Calu3 (cell line): ENCODE measurements at regions of chr4 and their contacts with region 1.

Region 1: GRCh38 chr4:11428899-11429698 is 405 bp upstream of the HS3ST1 start:
- DNase-seq: peak; percentile 95
- H3K4me3 Mint-ChIP-seq: peak overlapping the region; percentile 92
- H3K27ac Mint-ChIP-seq: peak overlapping the region; percentile 92
- H3K4me1 Mint-ChIP-seq: peaks cover 16% of the 10 kb centered on the region
- H3K27me3 Mint-ChIP-seq: no peaks in the 10 kb centered on the region
- CTCF ChIP-seq: peak; percentile 66

Region 2: DNA sequence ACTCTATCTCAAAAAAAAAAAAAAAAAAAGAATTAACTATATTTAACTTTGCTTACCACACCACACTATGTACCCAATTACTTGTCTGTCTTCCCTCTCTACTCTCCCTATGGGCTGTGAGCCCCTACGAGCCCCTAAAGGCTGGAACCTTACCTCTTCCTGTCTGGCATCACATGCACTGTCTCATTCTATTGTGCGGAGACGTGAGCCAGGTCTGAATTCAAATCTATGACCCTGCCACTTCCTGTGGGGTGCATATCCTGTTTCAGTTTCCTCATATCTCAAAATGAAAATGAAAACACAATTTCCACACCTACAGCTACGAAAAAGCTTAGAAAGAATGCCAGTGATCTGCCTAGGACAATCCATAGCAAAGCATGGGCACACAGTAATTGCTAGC is 42.5 kb after region 1 on chr4:
- CTCF ChIA-PET with region 1: no interaction called
- intact Hi-C with region 1: loop called (anchors 1 kb)
- DNase-seq: peak; percentile 27
- H3K4me3 Mint-ChIP-seq: peak overlapping the region; percentile 51
- H3K27ac Mint-ChIP-seq: peak overlapping the region; percentile 75
- H3K4me1 Mint-ChIP-seq: peaks cover 63% of the 10 kb centered on the region
- H3K27me3 Mint-ChIP-seq: no peaks in the 10 kb centered on the region
- CTCF ChIP-seq: no peak

Region 3: DNA sequence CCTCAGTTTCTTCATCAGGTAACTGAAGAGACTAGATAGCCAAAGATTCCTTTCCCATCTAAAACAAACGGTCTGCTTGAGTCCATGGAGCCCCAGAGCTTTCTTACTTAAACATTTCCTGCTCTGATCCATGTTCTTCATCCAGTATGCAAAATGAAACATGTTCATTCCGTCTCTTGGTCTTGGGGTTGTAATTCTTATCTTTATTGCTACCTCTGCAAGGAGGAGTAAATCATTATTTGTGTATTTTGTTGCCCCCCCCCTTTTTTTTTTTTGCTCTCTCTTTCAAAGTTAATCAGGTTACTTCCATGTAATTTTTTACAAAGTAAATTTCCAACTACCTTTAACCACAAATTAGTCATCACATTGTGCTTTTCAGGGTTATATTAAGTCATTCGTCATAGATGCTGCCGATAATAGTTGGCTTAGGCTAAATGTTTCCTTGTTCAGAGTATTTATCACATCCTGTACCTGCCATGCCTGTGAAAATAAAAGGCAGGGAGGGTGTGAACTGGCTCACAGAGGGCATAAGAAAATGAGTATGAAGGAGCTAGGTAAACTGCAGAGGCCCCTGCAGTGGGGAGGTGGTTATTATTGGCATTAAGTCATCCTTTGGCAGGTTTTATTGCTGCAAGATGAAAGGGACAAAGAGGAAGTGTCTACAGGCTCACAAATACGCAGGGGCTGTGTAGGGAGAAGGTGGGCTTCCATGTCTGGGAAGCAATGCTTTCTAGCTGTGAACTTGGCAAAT is 76.3 kb after region 1 on chr4:
- CTCF ChIA-PET with region 1: no interaction called
- intact Hi-C with region 1: loop called (anchors 2 kb)
- DNase-seq: peak; percentile 69
- H3K4me3 Mint-ChIP-seq: peak overlapping the region; percentile 25
- H3K27ac Mint-ChIP-seq: peak overlapping the region; percentile 99
- H3K4me1 Mint-ChIP-seq: peaks cover 68% of the 10 kb centered on the region
- H3K27me3 Mint-ChIP-seq: no peaks in the 10 kb centered on the region
- CTCF ChIP-seq: no peak

Region 4: GRCh38 chr4:11635359-11636072 is 206.4 kb after region 1 on chr4:
- CTCF ChIA-PET with region 1: interaction called, 3 read pairs
- intact Hi-C with region 1: loop called (anchors 2 kb)
- DNase-seq: peak; percentile 56
- H3K4me3 Mint-ChIP-seq: no peak overlapping the region
- H3K27ac Mint-ChIP-seq: peak overlapping the region; percentile 98
- H3K4me1 Mint-ChIP-seq: peaks cover 66% of the 10 kb centered on the region
- H3K27me3 Mint-ChIP-seq: no peaks in the 10 kb centered on the region
- CTCF ChIP-seq: no peak